GM10248 (cell line): ENCODE measurements at regions of chr11 and their contacts with region 1.

Region 1: DNA sequence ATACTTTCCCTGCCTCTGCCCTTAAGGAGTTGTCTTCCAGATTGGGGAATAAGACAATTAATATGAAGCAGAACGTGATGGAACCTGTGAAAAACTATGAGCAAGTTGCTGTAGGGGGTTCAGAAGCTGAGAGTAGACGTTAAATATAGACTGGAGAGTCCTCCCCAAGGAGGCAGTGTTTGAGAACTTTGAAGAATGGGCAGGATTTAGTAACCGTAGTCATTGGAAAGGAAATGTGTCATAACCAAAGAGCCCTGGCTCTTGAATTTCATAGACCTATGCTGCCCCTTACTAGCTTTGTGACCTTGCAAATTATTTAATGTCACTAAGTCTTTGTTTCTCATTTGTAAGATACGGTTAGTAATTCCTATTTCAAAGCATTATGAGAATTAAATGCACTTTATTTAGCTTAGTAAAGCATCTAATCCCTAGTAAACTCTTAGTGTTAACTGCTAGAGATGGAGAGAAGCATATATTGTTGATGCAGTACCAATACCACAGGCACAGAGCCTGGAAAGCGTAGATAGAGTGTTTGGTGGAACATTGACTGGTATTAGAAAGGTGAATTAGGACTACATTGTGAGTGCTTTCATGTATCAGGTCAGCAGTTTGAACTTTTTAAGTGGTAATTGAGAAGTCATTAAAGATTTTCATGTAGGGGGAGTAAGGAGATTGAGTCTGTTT is 54.1 kb downstream of the MCAM start:
- DNase-seq: peak; percentile 19
- CTCF ChIP-seq: no peak

Region 2: GRCh38 chr11:119277660-119278059 is 14.8 kb after region 1 on chr11:
- CTCF ChIA-PET with region 1: interaction called, 12 read pairs
- POLR2A ChIA-PET with region 1: no interaction called
- DNase-seq: no peak
- CTCF ChIP-seq: no peak

Region 3: DNA sequence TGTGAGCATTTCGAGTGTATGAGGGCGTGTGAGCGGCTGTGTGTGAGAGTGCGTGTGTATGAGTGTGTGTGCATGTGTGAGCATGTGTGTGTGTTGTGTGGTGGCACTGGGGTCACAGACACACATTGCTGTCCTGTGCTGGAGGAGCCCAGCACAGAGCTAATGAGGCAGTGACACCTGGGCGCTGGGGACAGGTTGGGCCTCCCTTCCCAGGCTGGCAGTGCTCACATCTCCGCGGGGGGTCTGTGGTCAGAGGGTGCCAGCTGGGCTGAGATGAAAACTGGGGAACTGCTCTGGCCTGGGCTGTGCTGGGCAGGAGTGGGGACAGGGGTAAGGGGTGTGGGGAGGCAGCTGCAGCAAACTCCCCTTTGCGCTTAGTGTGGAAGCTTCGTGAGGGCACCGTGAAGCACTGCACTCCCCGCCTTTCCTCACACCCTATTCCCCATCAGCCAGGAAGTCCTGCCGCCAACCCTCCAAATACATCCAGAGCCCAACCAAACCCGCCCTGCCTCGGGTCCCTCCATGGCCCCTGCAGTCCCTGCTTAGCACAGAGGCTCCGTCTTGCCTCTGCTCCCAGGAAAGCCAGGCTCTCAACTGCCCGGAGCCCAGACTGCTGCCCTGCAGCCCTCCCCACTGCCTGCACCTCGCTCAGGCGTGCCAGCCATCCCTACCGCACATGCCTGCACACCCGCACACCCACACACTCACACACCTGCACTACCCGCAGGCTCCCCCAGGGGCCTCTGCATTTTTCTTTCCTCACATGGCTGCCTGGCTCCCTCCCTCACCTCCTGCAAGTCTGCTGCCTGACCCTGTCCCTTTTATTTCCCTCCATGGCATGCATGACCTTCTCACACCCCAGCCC is 222.2 kb after region 1 on chr11:
- CTCF ChIA-PET with region 1: no interaction called
- POLR2A ChIA-PET with region 1: no interaction called
- DNase-seq: no peak
- CTCF ChIP-seq: no peak